Dendritic cell treated with granulocyte-macrophage colony-stimulating factor and Interleukin-4, amounts not matched to agents 40 ng/mL and 50 ng/mL, for 4 days (primary cell): ENCODE measurements at regions of chr12 and their contacts with region 1.

Region 1: DNA sequence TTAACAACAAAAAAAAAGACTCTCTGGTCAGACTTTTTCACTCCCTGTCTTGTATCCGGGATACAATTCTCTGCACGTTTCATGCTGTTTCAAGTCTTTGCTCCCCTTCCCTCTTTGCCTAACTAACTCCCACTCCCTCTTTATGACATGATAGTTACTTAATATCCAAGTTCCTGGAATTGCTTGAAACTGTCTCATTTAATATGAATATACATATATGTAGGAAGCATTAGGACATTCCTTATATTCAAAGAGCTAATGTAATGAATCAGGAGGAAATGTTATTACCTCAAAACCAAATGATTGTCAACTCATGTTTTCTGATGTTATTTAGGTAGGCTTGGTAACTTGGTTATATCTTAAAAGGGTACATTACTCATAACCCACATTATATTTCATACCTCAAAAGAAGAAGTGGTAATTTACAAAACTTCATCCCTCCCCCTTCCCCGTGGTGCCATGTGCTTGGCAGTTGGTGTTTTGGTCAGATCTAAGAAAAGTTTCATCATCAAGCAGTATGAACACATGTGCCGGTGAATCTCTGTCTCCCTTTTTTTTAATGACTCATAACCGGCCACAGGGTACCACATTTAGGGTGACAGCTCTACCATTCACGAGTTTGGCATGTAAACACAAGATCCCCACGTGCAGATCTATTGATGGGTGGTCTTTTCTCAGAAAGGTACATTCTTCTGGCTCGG is 56.5 kb downstream of the HCAR2 start:
- H3K4me3 Mint-ChIP-seq: peak overlapping the region; percentile 66
- H3K27ac Mint-ChIP-seq: peak overlapping the region; percentile 63
- H3K4me1 Mint-ChIP-seq: peaks cover 41% of the 10 kb centered on the region
- H3K27me3 Mint-ChIP-seq: peaks cover 9% of the 10 kb centered on the region

Region 2: GRCh38 chr12:122031342-122032216 is 615.1 kb before region 1 on chr12:
- intact Hi-C with region 1: no loop called
- H3K4me3 Mint-ChIP-seq: no peak overlapping the region
- H3K27ac Mint-ChIP-seq: no peak overlapping the region
- H3K4me1 Mint-ChIP-seq: peaks cover 52% of the 10 kb centered on the region
- H3K27me3 Mint-ChIP-seq: no peaks in the 10 kb centered on the region

Region 3: DNA sequence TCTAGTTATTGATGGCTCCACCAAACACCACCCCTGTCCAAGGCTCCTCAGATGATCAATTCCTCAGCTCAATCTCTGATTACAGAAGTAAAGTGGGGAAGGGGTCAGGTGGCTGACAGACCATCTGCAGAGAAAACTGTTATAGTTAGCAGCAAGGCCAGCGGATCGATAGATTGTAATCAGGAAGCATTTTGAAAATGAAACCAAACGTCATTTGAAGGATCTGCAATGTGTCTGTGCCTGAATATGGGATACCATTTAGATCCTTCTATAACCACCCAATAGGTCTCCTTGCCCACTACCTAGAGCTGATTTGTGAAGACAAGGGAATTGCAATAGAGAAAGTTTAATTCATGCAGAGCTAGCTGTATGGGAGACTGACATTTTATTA is 44.9 kb after region 1 on chr12:
- intact Hi-C with region 1: loop called (anchors 10 kb)
- H3K4me3 Mint-ChIP-seq: no peak overlapping the region
- H3K27ac Mint-ChIP-seq: no peak overlapping the region
- H3K4me1 Mint-ChIP-seq: peaks cover 6% of the 10 kb centered on the region
- H3K27me3 Mint-ChIP-seq: peaks cover 11% of the 10 kb centered on the region